GM12878 (cell line): ENCODE measurements at regions of chr5 and their contacts with region 1.

Region 1: GRCh38 chr5:124920909-124921666 is 174.6 kb upstream of the ZNF608 start:
- DNase-seq: no peak
- ATAC-seq: peak; percentile 92
- H3K4me3 ChIP-seq: peak overlapping the region; percentile 44; the same call in 1 of the 2 replicates
- H3K27ac ChIP-seq: peak overlapping the region; percentile 86
- H3K4me1 ChIP-seq: peaks cover 30% of the 10 kb centered on the region
- H3K27me3 ChIP-seq: no peaks in the 10 kb centered on the region
- CTCF ChIP-seq: peak in 1 of 3 experiments; percentile 14; a peak in 1 of 6 replicates
- EP300 ChIP-seq: peak; percentile 83 to 85
- POLR2A ChIP-seq: no peak
- RAD21 ChIP-seq: peak; percentile 27

Region 2: GRCh38 chr5:123671042-123671441 is 1250.0 kb before region 1 on chr5:
- CTCF ChIA-PET with region 1: no interaction called
- POLR2A ChIA-PET with region 1: no interaction called
- RAD21 ChIA-PET with region 1: no interaction called
- SMC1A ChIA-PET with region 1: no interaction called
- in situ Hi-C with region 1: no loop called
- intact Hi-C with region 1: loop called (anchors 10 kb)
- DNase-seq: no peak
- ATAC-seq: peak; percentile 27; the same call in 2 of the 3 replicates
- H3K4me3 ChIP-seq: no peak overlapping the region
- H3K27ac ChIP-seq: no peak overlapping the region
- H3K4me1 ChIP-seq: no peaks in the 10 kb centered on the region
- H3K27me3 ChIP-seq: no peaks in the 10 kb centered on the region
- CTCF ChIP-seq: peak; percentile 71 to 74 (median 72)
- EP300 ChIP-seq: no peak
- POLR2A ChIP-seq: no peak
- RAD21 ChIP-seq: peak; percentile 89

Region 3: GRCh38 chr5:124735169-124735858 is 185.8 kb before region 1 on chr5:
- CTCF ChIA-PET with region 1: no interaction called
- POLR2A ChIA-PET with region 1: no interaction called
- RAD21 ChIA-PET with region 1: interaction called, 7 read pairs
- SMC1A ChIA-PET with region 1: interaction called, 25 read pairs
- in situ Hi-C with region 1: no loop called
- intact Hi-C with region 1: no loop called
- DNase-seq: no peak
- ATAC-seq: no peak
- H3K4me3 ChIP-seq: peak overlapping the region; percentile 9; the same call in 1 of the 2 replicates
- H3K27ac ChIP-seq: no peak overlapping the region
- H3K4me1 ChIP-seq: peaks cover 9% of the 10 kb centered on the region
- H3K27me3 ChIP-seq: no peaks in the 10 kb centered on the region
- CTCF ChIP-seq: no peak
- EP300 ChIP-seq: no peak
- POLR2A ChIP-seq: no peak
- RAD21 ChIP-seq: no peak

Region 4: DNA sequence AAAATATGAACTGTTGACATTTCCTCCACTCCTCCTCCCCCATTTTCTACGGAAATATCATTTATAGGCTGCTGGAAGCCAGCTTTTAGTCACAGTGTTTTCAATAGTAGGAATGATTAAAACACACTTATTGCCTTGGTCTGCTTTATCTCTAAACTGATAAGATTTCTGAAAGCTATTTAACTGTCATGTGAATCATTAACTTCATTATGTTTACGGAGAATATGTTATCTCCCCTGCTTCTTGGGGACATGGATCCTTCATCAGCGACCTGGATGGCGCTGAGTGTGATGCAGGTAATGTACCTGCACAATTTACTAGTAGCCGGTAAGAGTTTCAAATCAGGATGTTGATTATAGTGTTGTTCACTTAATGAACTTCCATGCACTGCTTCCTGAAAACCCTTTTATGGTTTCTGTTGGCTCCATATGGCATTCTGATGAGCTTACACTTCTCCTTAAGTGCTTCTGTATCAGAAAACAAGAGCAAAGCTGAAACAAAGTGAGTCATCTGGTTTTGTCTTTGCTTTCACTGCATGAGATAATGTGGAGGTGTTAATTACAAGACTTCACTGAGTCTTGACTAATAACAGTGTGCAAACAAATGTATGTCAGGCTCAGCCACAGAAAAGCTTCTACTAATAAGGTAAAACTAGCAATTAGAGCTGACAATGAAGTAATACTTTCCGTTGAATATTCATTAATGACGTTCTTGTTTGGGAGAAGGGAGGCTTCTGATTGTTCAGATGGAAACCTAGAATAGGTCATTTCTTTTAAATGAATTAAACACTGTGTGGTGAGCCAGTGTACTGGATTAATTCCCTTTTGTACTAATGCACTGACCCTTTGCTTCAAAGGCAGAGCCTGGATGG is 12.3 kb before region 1 on chr5:
- CTCF ChIA-PET with region 1: interaction called, 34 read pairs
- POLR2A ChIA-PET with region 1: interaction called, 48 read pairs
- RAD21 ChIA-PET with region 1: interaction called, 190 read pairs
- SMC1A ChIA-PET with region 1: interaction called, 166 read pairs
- in situ Hi-C with region 1: no loop called
- intact Hi-C with region 1: loop called (anchors 1 kb)
- DNase-seq: peak; percentile 75
- ATAC-seq: peak; percentile 88
- H3K4me3 ChIP-seq: no peak overlapping the region
- H3K27ac ChIP-seq: peak overlapping the region; percentile 51
- H3K4me1 ChIP-seq: peaks cover 41% of the 10 kb centered on the region
- H3K27me3 ChIP-seq: no peaks in the 10 kb centered on the region
- CTCF ChIP-seq: no peak
- EP300 ChIP-seq: peak; percentile 96 to 98
- POLR2A ChIP-seq: no peak
- RAD21 ChIP-seq: peak; percentile 20; the same call in 1 of the 2 replicates

Region 5: DNA sequence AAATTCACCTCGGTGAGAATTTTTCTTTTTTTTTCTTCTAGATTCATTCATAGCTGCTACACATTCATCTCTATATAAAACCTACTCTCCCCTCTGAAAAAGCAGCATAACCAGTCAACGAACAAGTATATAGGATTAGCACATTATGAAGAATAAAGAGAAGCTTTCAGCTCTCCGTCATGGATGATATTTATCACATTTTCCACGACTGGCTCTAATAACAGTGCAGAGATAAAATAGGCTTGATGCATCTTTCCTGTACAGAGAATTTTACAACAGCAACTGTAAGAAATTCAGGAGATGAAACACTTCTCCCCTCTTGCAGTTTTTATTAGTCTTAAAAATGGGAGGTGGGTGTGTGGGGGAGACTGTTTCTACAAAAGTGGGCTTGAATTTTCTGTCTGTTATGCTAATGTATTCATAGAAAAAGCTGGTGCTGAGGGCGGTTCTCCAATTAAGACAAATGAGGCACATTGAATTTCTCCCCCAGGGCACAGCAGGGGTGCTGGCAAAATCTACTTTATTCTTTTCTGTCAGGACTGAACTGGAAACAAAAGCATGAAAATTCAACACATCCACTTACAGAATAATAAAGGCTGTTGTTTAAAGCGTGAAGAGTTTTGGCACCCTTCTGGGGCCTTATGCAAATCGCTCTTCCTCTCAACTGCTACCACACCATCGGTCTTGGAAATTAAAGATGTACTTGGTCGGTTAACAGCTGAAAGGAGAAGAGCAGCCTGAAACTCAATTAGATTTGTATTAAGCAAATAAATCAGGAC is 59.3 kb after region 1 on chr5:
- CTCF ChIA-PET with region 1: interaction called, 3 read pairs
- POLR2A ChIA-PET with region 1: no interaction called
- RAD21 ChIA-PET with region 1: interaction called, 7 read pairs
- SMC1A ChIA-PET with region 1: interaction called, 23 read pairs
- in situ Hi-C with region 1: no loop called
- intact Hi-C with region 1: no loop called
- DNase-seq: peak; percentile 48
- ATAC-seq: peak; percentile 91
- H3K4me3 ChIP-seq: peak overlapping the region; percentile 19
- H3K27ac ChIP-seq: peak overlapping the region; percentile 22
- H3K4me1 ChIP-seq: peaks cover 17% of the 10 kb centered on the region
- H3K27me3 ChIP-seq: no peaks in the 10 kb centered on the region
- CTCF ChIP-seq: no peak
- EP300 ChIP-seq: no peak; a peak in 1 of 4 replicates
- POLR2A ChIP-seq: no peak
- RAD21 ChIP-seq: peak; percentile 17; the same call in 1 of the 2 replicates

Region 6: GRCh38 chr5:125014202-125014601 is 93.1 kb after region 1 on chr5:
- CTCF ChIA-PET with region 1: no interaction called
- POLR2A ChIA-PET with region 1: no interaction called
- RAD21 ChIA-PET with region 1: interaction called, 5 read pairs
- SMC1A ChIA-PET with region 1: interaction called, 47 read pairs
- in situ Hi-C with region 1: no loop called
- intact Hi-C with region 1: loop called (anchors 5 kb)
- DNase-seq: no peak
- ATAC-seq: no peak
- H3K4me3 ChIP-seq: no peak overlapping the region
- H3K27ac ChIP-seq: no peak overlapping the region
- H3K4me1 ChIP-seq: peaks cover 11% of the 10 kb centered on the region
- H3K27me3 ChIP-seq: no peaks in the 10 kb centered on the region
- CTCF ChIP-seq: no peak
- EP300 ChIP-seq: no peak
- POLR2A ChIP-seq: no peak
- RAD21 ChIP-seq: no peak

Region 7: DNA sequence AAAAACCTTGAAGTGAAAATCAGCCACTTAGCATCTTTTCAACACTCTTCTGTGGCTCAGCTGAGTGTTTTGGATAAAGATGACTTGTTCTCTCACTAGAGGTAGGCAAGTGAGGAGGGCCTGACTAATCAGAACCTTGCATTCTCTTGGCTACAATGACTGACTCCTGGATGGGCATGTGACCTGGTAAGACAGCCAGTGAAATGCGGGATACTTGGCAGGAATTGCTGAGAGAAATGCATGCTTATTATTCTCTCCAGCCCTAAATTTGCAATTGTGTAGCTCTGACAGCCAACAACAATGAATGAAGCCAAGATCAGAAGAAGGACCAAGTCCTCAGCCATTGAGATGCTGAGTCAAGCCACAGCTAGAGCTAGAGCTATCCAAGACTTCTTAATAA is 315.9 kb after region 1 on chr5:
- CTCF ChIA-PET with region 1: no interaction called
- POLR2A ChIA-PET with region 1: no interaction called
- RAD21 ChIA-PET with region 1: no interaction called
- SMC1A ChIA-PET with region 1: no interaction called
- in situ Hi-C with region 1: no loop called
- intact Hi-C with region 1: no loop called
- DNase-seq: no peak
- ATAC-seq: no peak
- H3K4me3 ChIP-seq: no peak overlapping the region
- H3K27ac ChIP-seq: no peak overlapping the region
- H3K4me1 ChIP-seq: no peaks in the 10 kb centered on the region
- H3K27me3 ChIP-seq: 0 out of 4 replicates have a peak, but pooled peaks cover 0 to 3% of the 10 kb centered on the region in 2 experiments
- CTCF ChIP-seq: no peak
- EP300 ChIP-seq: no peak
- POLR2A ChIP-seq: no peak
- RAD21 ChIP-seq: no peak